SK-N-SH (cell line): ENCODE measurements at regions of chr4 and their contacts with region 1.

Region 1: DNA sequence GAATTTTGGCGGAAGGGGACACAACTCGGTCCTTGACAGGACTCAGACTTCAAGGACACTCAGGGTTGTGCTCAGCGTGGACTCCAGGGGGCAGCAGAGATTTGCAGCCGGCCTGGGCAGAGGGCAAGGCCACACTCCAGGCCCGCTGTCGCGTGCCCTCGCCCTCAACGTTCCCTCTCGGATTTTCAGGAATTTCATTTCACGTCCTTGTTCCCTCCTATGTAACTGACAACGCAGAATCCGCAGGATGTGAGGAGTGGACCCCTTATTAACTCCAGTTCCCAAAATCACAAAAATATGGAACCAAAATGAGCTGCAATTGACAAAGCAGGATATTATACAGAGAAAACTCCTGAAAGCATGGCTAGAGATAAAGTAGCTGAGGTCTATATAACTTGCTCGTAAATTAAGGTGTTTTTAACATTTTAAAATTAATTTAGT is 21.0 kb upstream of the DCTD start:
- DNase-seq: peak; percentile 84
- H3K4me3 ChIP-seq: peak overlapping the region in 1 of 2 experiments; percentile 11; a peak in 1 of 4 replicates
- H3K27ac ChIP-seq: no peak overlapping the region
- H3K4me1 ChIP-seq: no peaks in the 10 kb centered on the region
- H3K27me3 ChIP-seq: no peaks in the 10 kb centered on the region; the same call in 1 of the 2 replicates
- CTCF ChIP-seq: peak; percentile 96
- EP300 ChIP-seq: no peak
- RAD21 ChIP-seq: peak; percentile 91

Region 2: GRCh38 chr4:182427554-182427953 is 510.7 kb before region 1 on chr4:
- CTCF ChIA-PET with region 1: no interaction called
- POLR2A ChIA-PET with region 1: no interaction called
- DNase-seq: no peak
- H3K4me3 ChIP-seq: no peak overlapping the region
- H3K27ac ChIP-seq: peak overlapping the region in 1 of 2 experiments; percentile 64; a peak in 1 of 4 replicates
- H3K4me1 ChIP-seq: no peaks in the 10 kb centered on the region; a peak in 2 of 4 replicates
- H3K27me3 ChIP-seq: no peaks in the 10 kb centered on the region
- CTCF ChIP-seq: no peak
- EP300 ChIP-seq: no peak
- RAD21 ChIP-seq: no peak

Region 3: GRCh38 chr4:182695842-182696241 is 242.4 kb before region 1 on chr4:
- CTCF ChIA-PET with region 1: no interaction called
- POLR2A ChIA-PET with region 1: no interaction called
- DNase-seq: no peak
- H3K4me3 ChIP-seq: no peak overlapping the region
- H3K27ac ChIP-seq: no peak overlapping the region
- H3K4me1 ChIP-seq: no peaks in the 10 kb centered on the region
- H3K27me3 ChIP-seq: no peaks in the 10 kb centered on the region
- CTCF ChIP-seq: no peak
- EP300 ChIP-seq: no peak
- RAD21 ChIP-seq: no peak

Region 4: GRCh38 chr4:182925298-182925738 is 12.9 kb before region 1 on chr4:
- CTCF ChIA-PET with region 1: interaction called, 56 read pairs
- POLR2A ChIA-PET with region 1: no interaction called
- DNase-seq: peak; percentile 79
- H3K4me3 ChIP-seq: no peak overlapping the region; a peak in 1 of 4 replicates
- H3K27ac ChIP-seq: no peak overlapping the region
- H3K4me1 ChIP-seq: no peaks in the 10 kb centered on the region; a peak in 2 of 4 replicates
- H3K27me3 ChIP-seq: no peaks in the 10 kb centered on the region
- CTCF ChIP-seq: peak; percentile 63
- EP300 ChIP-seq: no peak
- RAD21 ChIP-seq: peak; percentile 91

Region 5: DNA sequence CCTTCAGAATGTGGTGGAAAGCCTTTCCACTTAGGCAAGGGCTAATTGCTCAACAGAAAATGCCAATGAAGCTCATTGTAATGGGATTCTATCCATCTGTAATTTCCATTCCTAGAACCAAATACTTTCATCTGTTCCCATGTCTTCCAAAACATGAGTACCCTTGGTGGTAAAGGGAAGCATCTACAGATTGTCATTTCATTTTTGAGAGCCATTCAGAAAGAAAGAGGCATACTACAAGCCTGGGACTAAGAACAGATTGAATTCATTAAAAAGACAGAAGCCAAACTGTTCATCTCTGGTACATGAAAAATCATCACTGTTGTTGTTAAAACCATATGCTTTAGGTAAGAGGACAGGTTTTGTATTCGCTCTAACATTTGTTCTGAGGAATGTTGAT is 22.5 kb after region 1 on chr4:
- CTCF ChIA-PET with region 1: interaction called, 10 read pairs
- POLR2A ChIA-PET with region 1: no interaction called
- DNase-seq: no peak
- H3K4me3 ChIP-seq: no peak overlapping the region
- H3K27ac ChIP-seq: no peak overlapping the region
- H3K4me1 ChIP-seq: no peaks in the 10 kb centered on the region
- H3K27me3 ChIP-seq: no peaks in the 10 kb centered on the region
- CTCF ChIP-seq: no peak
- EP300 ChIP-seq: no peak
- RAD21 ChIP-seq: no peak

Region 6: GRCh38 chr4:183241322-183241640 is 303.1 kb after region 1 on chr4:
- CTCF ChIA-PET with region 1: interaction called, 14 read pairs
- POLR2A ChIA-PET with region 1: no interaction called
- DNase-seq: no peak
- H3K4me3 ChIP-seq: no peak overlapping the region
- H3K27ac ChIP-seq: no peak overlapping the region
- H3K4me1 ChIP-seq: peaks cover 0 to 4% of the 10 kb centered on the region in 2 experiments; a peak in 1 of 4 replicates
- H3K27me3 ChIP-seq: no peaks in the 10 kb centered on the region
- CTCF ChIP-seq: no peak
- EP300 ChIP-seq: no peak
- RAD21 ChIP-seq: no peak

Region 7: GRCh38 chr4:183249857-183250256 is 311.6 kb after region 1 on chr4:
- CTCF ChIA-PET with region 1: interaction called, 90 read pairs
- POLR2A ChIA-PET with region 1: no interaction called
- DNase-seq: peak; percentile 57
- H3K4me3 ChIP-seq: no peak overlapping the region
- H3K27ac ChIP-seq: no peak overlapping the region
- H3K4me1 ChIP-seq: no peaks in the 10 kb centered on the region; a peak in 2 of 4 replicates
- H3K27me3 ChIP-seq: no peaks in the 10 kb centered on the region
- CTCF ChIP-seq: peak; percentile 63
- EP300 ChIP-seq: no peak
- RAD21 ChIP-seq: peak; percentile 86

Region 8: GRCh38 chr4:183256756-183257385 is 318.6 kb after region 1 on chr4:
- CTCF ChIA-PET with region 1: interaction called, 90 read pairs
- POLR2A ChIA-PET with region 1: no interaction called
- DNase-seq: peak; percentile 70
- H3K4me3 ChIP-seq: no peak overlapping the region
- H3K27ac ChIP-seq: no peak overlapping the region
- H3K4me1 ChIP-seq: no peaks in the 10 kb centered on the region; a peak in 1 of 4 replicates
- H3K27me3 ChIP-seq: no peaks in the 10 kb centered on the region
- CTCF ChIP-seq: peak; percentile 70
- EP300 ChIP-seq: no peak
- RAD21 ChIP-seq: peak; percentile 70